ENCODE measurements at regions of chr3 and their contacts with region 1.

Region 1: DNA sequence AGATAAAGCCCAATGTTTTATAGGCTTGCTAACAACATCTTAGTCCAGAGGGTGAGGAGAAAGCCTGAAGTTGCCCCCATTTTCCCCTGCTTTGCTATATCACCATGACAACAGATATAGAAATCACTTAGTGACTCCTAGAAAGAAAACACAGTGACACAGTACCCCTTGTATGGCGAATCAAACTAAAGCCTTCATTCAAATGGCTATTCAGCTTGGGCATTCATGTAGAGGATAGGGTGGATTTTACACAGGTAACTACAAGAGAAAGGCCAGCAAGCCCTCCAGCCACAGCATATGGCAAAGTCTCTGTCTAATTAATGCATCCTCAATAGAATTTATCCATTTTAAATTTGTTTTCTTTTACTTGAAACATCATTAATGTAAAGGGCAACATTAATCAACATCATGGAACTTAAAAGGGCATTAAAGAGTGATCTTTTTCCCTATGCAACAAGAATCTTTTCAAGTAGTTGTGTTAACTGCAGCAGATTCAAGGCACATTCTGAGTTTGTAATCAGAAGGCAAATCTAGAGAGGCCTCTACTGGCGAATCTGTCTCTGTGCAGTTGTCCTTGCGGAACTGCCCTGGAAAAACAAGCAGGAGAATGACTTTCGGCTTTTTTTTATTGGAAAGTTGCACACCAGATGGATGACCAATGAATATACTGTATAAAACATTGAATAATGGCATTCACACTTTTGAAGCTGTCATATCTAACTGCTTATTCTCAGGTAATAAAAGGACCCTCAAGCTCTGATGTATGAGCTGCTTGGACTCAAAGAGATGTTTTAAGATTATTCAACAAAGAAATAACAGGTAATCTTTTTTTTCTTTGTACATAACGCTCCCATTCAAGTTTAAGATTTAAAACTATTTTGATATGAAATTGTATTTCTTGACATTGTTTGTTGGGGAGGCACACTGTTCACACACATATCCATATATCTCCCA is 621.7 kb upstream of the AGTR1 start:
- DNase-seq: no peak
- ATAC-seq: peak; percentile 76
- H3K4me3 ChIP-seq: no peak overlapping the region
- H3K27ac ChIP-seq: no peak overlapping the region
- H3K4me1 ChIP-seq: no peaks in the 10 kb centered on the region; the same call in 1 of the 2 replicates
- H3K27me3 ChIP-seq: no peaks in the 10 kb centered on the region
- CTCF ChIP-seq: peak; percentile 80

Region 2: GRCh38 chr3:147119989-147120388 is 956.1 kb before region 1 on chr3:
- CTCF ChIA-PET with region 1: no interaction called
- POLR2A ChIA-PET with region 1: no interaction called
- in situ Hi-C with region 1: no loop called
- intact Hi-C with region 1: loop called (anchors 5 kb)
- DNase-seq: no peak
- ATAC-seq: no peak
- H3K4me3 ChIP-seq: no peak overlapping the region
- H3K27ac ChIP-seq: no peak overlapping the region
- H3K4me1 ChIP-seq: no peaks in the 10 kb centered on the region
- H3K27me3 ChIP-seq: no peaks in the 10 kb centered on the region
- CTCF ChIP-seq: peak; percentile 40; the same call in 1 of the 2 replicates

Region 3: GRCh38 chr3:147661916-147662315 is 414.1 kb before region 1 on chr3:
- CTCF ChIA-PET with region 1: interaction called, 10 read pairs
- POLR2A ChIA-PET with region 1: no interaction called
- in situ Hi-C with region 1: no loop called
- intact Hi-C with region 1: no loop called
- DNase-seq: no peak
- ATAC-seq: no peak
- H3K4me3 ChIP-seq: no peak overlapping the region
- H3K27ac ChIP-seq: no peak overlapping the region
- H3K4me1 ChIP-seq: no peaks in the 10 kb centered on the region
- H3K27me3 ChIP-seq: no peaks in the 10 kb centered on the region
- CTCF ChIP-seq: no peak

Region 4: DNA sequence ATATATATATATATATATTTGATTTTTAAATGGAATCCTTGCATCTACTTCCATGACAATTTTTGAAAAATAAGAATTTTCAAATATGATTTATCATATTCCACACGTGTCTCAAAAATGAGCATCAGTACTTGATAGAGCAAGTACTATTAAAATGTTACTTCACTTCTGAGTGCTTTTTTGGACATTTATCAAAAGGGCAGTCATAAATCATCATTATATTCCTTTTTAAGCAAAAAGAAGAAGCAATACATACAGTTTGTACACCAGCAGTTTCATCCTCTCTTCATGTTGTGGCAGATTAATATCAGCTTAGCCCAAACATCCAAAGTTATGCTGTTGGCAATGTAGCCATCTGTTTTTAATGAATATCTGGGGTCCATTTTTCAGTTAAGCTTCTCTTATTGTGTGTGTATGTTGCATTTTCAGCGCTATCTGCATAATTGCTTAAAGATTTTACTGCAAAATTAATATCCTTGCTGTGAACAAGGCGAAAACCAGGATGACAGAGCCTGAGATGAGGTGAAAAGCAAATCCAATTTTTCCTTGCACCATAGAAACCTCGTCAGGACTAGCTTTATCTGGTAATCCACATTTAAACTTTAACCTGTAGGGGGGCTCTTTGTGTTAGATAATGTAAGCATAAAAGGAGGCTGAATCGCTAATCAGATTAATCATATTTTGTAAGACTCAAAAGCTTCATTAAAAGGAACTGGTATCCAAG is 16.7 kb after region 1 on chr3:
- CTCF ChIA-PET with region 1: no interaction called
- POLR2A ChIA-PET with region 1: no interaction called
- in situ Hi-C with region 1: no loop called
- intact Hi-C with region 1: no loop called
- DNase-seq: no peak
- ATAC-seq: no peak
- H3K4me3 ChIP-seq: no peak overlapping the region
- H3K27ac ChIP-seq: no peak overlapping the region
- H3K4me1 ChIP-seq: no peaks in the 10 kb centered on the region
- H3K27me3 ChIP-seq: no peaks in the 10 kb centered on the region
- CTCF ChIP-seq: no peak

Measured in Panc1 (cell line).